Right lobe of liver (tissue), 6 donors: ENCODE measurements at regions of chr7 and their contacts with region 1.

Region 1: DNA sequence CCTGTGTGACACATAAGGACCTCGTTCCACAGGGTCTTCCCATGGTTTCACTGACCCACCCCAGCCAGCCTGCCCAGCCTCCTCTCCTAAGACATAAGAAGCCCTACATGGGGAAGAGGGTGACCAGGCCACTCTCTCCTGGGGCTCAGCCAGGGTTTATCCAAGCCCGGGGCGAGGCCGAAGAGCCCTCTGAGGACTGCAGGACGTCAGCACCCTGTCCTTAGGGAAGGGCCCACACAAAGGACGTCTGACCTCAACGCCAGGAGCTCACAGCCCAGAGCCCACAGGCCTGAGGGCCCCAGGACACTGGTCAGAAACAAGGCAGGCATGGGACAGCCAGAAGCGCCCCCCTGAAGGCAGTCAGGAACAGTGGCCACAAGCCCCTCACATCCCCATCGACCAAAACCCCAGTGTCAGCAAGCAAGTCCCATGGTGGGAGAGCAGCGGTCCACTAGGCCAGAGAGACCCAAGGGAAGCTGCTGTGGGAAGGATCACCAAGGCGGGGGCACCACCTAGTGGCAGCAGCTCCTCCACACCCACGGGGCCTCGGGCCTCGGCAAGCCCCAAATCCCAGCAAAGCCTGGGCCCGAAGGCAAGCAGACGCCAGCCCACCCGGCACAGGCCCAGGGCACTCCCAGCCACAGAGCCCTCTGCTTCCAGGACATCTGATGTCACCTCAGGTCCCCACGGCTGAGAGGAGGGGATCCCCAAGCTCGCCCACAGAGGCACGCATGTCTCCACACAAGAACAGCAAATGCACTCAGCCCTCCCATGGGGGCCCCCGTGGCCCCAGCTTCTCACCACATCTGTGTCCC is 23.4 kb downstream of the MAD1L1 start:
- DNase-seq: peak; percentile 67 to 72 (median 71)
- ATAC-seq: peak; percentile 78 to 94 (median 88)
- H3K4me3 ChIP-seq: no peak overlapping the region
- H3K27ac ChIP-seq: no peak overlapping the region
- H3K4me1 ChIP-seq: no peaks in the 10 kb centered on the region
- H3K27me3 ChIP-seq: no peaks in the 10 kb centered on the region
- CTCF ChIP-seq: peak; percentile 56 to 74 (median 62)
- POLR2A ChIP-seq: no peak

Region 2: GRCh38 chr7:1579481-1580421 is 629.6 kb before region 1 on chr7:
- intact Hi-C with region 1: loop called (anchors 10 kb)
- DNase-seq: peak; percentile 71 to 77 (median 74)
- ATAC-seq: peak; percentile 96 to 99 (median 98)
- H3K4me3 ChIP-seq: no peak overlapping the region
- H3K27ac ChIP-seq: no peak overlapping the region
- H3K4me1 ChIP-seq: no peaks in the 10 kb centered on the region
- H3K27me3 ChIP-seq: no peaks in the 10 kb centered on the region
- CTCF ChIP-seq: peak; percentile 71 to 78 (median 76)
- POLR2A ChIP-seq: no peak